Activated naive CD4-positive, alpha-beta T cell treated with anti-CD3 and anti-CD28 coated beads for 36 hours (primary cell): ENCODE measurements at regions of chr15 and their contacts with region 1.

Region 1: DNA sequence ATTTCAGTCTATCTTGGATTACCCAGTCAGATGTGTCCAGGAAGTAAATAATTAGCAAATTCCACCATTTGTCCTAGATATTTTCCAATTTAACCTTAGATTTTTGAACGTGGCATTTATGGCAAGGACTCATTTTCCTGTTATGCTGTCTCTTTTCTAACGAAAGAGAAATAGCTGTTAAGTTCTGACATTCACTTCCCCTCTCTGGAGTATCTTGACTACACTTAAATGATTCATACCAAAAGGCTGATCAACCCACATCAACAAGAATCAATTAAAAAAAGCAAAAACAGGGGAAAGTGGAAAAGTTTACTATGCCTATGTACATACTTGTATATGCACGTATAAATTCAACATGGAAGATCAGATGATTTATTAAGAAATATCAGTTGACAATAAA is 149.9 kb downstream of the FRMD5 start:
- DNase-seq: no peak
- H3K4me3 Mint-ChIP-seq: no peak overlapping the region
- H3K27ac Mint-ChIP-seq: no peak overlapping the region
- H3K4me1 Mint-ChIP-seq: peaks cover 11% of the 10 kb centered on the region
- H3K27me3 Mint-ChIP-seq: peaks cover 23% of the 10 kb centered on the region

Region 2: DNA sequence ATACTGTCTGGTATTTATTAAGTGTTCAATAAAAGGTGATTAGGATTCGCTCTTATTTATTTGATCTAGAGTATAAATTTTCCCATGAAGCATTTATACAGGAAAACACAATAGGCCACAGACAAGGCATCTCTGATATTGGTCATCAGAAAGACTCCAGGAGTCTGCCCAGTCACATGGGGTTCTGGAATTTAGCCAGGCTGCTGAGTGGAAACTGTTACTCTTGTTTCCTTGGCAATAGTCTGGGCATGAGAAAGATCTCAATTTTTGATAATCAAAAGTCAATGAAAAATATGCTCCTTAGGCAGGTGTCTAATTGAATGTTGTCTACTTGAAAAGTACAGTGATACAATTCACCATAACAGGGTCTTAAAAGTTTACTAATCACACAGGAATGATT is 11.3 kb before region 1 on chr15:
- CTCF ChIA-PET with region 1: no interaction called
- intact Hi-C with region 1: loop called (anchors 1 kb)
- DNase-seq: no peak
- H3K4me3 Mint-ChIP-seq: no peak overlapping the region
- H3K27ac Mint-ChIP-seq: no peak overlapping the region
- H3K4me1 Mint-ChIP-seq: peaks cover 7% of the 10 kb centered on the region
- H3K27me3 Mint-ChIP-seq: peaks cover 12% of the 10 kb centered on the region

Region 3: DNA sequence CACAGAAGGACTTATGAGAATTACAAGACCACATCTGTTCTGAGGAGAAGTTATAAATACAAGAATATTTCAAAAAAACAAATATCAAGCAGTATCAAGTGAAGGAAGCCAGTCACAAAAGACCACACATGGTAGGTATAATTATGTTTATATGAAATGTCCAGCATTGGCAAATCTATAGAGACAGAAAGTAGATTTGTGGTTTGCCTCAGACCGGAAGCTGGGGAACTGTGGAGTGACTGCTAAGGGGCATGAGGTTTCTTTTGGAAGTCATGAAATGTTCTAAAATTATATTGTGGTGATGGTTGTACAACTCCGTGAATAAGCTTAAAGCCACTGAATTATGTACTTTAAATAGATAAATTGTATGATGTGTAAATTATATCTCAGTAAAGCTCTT is 12.9 kb after region 1 on chr15:
- CTCF ChIA-PET with region 1: no interaction called
- intact Hi-C with region 1: no loop called
- DNase-seq: no peak
- H3K4me3 Mint-ChIP-seq: no peak overlapping the region
- H3K27ac Mint-ChIP-seq: no peak overlapping the region
- H3K4me1 Mint-ChIP-seq: no peaks in the 10 kb centered on the region
- H3K27me3 Mint-ChIP-seq: peaks cover 5% of the 10 kb centered on the region